Common myeloid progenitor, CD34-positive (primary cell): ENCODE measurements at regions of chr11 and their contacts with region 1.

Region 1: DNA sequence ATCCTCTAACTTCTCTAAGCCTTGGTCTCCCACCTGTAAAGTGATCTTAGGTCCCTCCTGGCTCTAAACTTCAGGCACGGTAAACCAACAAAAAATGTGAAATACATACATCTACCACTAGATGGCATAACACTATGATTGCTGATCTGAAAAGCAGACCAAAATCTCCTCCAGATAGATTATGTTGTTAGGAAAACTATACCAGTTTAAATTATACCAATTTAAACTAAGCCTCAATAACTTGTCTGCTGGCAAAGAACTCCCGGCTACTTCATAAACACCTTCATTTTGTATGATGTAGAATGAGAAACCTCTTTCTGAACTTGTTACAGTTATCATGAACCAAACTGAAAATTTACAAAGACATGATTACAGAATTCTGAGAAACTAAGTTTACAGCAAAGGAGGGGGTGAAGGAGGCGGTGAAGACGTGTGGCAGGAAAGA is 85.9 kb downstream of the SBF2 start:
- DNase-seq: peak; percentile 47 to 59 (median 51)
- H3K4me3 ChIP-seq: no peak overlapping the region
- H3K27ac ChIP-seq: no peak overlapping the region
- H3K4me1 ChIP-seq: peaks cover 0 to 4% (median 0%) of the 10 kb centered on the region in 4 experiments
- H3K27me3 ChIP-seq: no peaks in the 10 kb centered on the region

Region 2: DNA sequence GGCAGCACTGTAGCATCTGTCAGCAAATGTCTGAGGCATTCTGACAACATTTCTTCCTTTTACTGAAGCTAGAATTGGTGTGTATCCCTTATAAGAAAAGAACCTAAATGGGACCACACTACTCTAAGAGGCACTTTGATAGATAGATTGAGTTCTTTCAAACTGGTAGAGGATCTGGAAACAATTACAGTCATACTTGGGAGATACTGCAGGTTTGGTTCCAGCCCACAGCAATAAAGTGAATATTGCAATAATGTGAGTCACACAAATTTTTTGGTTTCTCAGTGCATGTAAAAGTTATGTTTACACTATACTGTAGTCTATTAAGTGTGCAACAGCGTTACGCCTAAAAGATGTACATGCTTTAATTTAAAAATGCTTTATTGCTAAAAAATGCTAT is 11.1 kb before region 1 on chr11:
- CTCF ChIA-PET with region 1: interaction called, 22 read pairs
- POLR2A ChIA-PET with region 1: no interaction called
- DNase-seq: no peak
- H3K4me3 ChIP-seq: no peak overlapping the region
- H3K27ac ChIP-seq: no peak overlapping the region
- H3K4me1 ChIP-seq: no peaks in the 10 kb centered on the region
- H3K27me3 ChIP-seq: no peaks in the 10 kb centered on the region

Region 3: GRCh38 chr11:10222399-10222798 is 14.2 kb after region 1 on chr11:
- CTCF ChIA-PET with region 1: interaction called, 15 read pairs
- POLR2A ChIA-PET with region 1: no interaction called
- DNase-seq: no peak
- H3K4me3 ChIP-seq: no peak overlapping the region
- H3K27ac ChIP-seq: no peak overlapping the region
- H3K4me1 ChIP-seq: no peaks in the 10 kb centered on the region
- H3K27me3 ChIP-seq: no peaks in the 10 kb centered on the region

Region 4: DNA sequence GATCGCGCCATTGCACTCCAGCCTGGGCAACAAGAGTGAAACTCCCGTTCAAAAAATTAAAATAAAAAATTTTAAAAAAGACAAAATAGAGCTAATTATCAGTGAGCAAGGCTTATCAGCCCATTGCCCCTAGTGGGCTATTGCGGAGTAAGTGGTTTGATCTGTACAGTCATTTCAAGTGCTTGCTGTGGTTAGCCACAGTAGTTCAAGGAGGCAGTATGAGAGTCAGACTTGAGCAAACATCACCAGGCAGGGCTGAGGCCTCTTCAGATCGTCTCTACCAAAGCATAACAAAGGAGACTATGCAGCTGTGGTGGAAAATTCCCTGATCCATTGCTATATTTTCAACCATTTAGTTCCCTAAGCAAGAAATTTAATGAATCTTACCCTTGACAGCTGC is 90.2 kb after region 1 on chr11:
- CTCF ChIA-PET with region 1: interaction called, 41 read pairs
- POLR2A ChIA-PET with region 1: no interaction called
- DNase-seq: peak; percentile 76 to 92 (median 89)
- H3K4me3 ChIP-seq: no peak overlapping the region
- H3K27ac ChIP-seq: no peak overlapping the region
- H3K4me1 ChIP-seq: peaks cover 6 to 44% (median 27%) of the 10 kb centered on the region in 4 experiments
- H3K27me3 ChIP-seq: peaks cover 0 to 12% (median 2%) of the 10 kb centered on the region in 5 experiments

Region 5: DNA sequence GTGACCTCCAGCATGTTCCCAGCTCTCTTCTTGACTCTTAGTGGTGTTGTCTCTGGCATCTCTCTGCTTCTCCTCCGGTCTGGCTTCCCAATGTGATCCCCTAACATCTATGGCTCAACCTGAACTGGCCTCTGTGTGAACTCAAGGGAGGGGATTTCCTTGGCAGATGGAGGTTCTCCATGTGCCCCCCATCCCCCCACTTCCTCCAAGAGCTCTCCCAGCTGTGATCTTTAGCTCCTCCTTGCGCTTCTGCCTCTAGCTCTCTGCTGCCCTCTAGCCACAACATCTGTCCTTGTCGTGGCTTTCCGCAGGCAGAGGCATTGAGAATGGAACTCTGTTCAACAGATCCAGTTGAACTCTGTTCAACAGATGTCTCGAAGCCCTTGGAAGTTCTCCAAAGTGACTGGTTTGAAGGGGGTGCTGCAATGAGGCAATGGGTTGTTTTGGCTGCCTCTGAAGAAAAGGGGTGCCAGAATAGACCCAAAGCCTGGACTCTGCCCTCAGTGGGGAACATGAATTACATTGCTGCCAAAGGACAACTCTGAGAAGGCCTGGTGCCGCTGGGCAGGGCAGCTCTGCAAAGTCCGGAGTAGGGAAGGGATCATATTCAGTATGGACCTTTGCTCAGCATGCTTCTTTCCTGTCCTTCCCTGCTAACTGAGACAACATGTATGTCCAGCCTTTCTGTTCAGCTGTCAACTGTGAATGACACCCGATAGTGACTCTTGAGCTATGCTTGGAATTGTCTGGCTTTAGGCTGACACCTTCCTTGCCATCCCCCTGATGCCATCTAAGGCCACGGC is 158.6 kb after region 1 on chr11:
- CTCF ChIA-PET with region 1: interaction called, 11 read pairs
- POLR2A ChIA-PET with region 1: no interaction called
- DNase-seq: peak; percentile 92 to 99 (median 98)
- H3K4me3 ChIP-seq: peak overlapping the region in 2 of 7 experiments; percentile 37 to 54
- H3K27ac ChIP-seq: no peak overlapping the region
- H3K4me1 ChIP-seq: peaks cover 0 to 9% (median 4%) of the 10 kb centered on the region in 4 experiments
- H3K27me3 ChIP-seq: no peaks in the 10 kb centered on the region